ENCODE measurements at regions of chr9 and their contacts with region 1.

Region 1: DNA sequence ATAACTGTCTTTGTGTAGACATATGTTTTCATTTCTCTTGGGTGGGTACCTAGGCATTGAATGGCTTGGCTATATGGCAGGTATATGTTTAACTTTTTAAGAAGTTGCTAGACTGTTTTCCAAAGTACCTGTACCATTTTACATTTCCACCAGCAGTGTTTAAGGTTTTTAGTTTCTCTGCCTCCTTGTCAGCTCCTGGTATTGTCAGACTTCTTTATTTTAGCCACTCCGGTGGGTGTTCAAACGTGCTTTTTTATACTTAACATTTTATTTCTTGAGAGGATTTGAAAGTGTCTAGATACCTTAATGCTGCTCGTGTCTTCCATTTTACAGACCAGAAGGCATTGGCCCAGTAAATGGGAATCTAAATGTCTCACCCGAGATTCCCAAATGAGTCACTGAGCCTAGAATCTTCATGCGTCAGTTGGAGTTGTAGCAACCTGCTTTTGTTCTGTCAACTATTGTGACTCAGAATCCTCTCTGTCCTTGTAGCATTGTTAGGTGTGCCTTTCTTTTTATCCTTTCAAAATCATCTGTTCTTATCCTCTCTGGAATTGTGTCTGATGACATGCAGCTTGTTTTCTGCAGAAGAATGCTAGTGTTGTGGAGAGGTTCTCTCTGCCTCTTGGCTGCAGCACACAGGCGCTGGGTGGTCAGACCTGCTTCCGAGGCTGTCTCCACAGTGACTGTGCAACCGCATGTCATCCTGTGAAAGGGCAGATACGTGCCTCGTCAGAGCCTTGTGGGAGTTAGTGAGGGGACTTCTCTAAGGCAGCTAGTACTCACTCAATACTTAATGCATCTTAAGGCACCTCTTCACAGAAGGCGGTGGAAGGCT is 291.8 kb downstream of the AOPEP start:
- DNase-seq: peak; percentile 96
- H3K27ac ChIP-seq: peak overlapping the region; percentile 90
- CTCF ChIP-seq: no peak

Region 2: GRCh38 chr9:94812343-94812742 is 206.0 kb before region 1 on chr9:
- CTCF ChIA-PET with region 1: no interaction called
- POLR2A ChIA-PET with region 1: no interaction called
- DNase-seq: peak; percentile 53
- H3K27ac ChIP-seq: no peak overlapping the region
- CTCF ChIP-seq: no peak

Region 3: DNA sequence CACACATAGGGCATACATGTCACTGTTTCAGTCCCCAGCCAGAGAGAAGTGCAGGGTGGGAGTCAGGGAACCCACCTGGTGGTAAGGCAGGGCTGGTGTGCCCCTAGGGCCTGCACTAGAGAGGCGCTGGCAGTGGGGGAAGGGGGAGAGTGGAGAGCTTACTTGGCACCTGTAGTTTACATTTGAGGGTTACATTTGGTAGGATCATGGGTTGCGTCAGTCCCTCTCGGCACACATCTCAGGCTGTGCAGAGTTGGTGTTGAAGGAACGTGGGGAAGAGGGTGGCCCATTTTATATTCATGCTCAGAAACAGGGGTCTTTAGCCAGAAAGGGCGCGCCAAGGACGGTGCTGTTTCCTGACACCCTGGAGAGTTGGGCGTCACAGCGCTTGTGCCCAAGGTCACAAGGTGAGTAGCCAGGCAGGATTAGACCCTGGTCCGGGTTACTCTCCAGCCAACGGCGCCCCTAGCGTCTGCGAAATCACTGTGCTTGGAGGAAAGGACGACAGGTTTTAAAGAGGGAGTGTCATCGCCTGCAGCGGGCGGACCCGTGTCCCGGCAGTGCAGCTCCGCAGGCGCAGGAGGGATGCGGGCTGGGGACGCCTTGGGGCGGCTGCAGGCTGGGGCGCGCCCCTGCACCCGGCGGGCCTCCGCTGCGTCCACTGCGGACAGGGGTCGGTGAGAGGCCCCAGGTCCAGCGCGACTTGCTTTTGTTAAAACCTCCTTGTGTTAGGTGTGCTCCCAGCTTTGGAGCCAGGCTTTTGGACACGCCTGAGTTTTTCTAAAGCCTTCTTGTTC is 26.6 kb after region 1 on chr9:
- CTCF ChIA-PET with region 1: interaction called, 11 read pairs
- POLR2A ChIA-PET with region 1: interaction called, 3 read pairs
- DNase-seq: peak; percentile 85
- H3K27ac ChIP-seq: peak overlapping the region; percentile 91
- CTCF ChIP-seq: peak; percentile 96